HCT116 (cell line): ENCODE measurements at regions of chr5 and their contacts with region 1.

Region 1: GRCh38 chr5:50286902-50287301 is 154.2 kb downstream of the EMB start:
- DNase-seq: no peak
- ATAC-seq: no peak
- H3K4me3 ChIP-seq: no peak overlapping the region
- H3K27ac ChIP-seq: no peak overlapping the region
- H3K4me1 ChIP-seq: no peaks in the 10 kb centered on the region
- H3K27me3 ChIP-seq: no peaks in the 10 kb centered on the region; the same call in 1 of the 2 replicates
- CTCF ChIP-seq: no peak
- POLR2A ChIP-seq: no peak
- RAD21 ChIP-seq: no peak

Region 2: GRCh38 chr5:50343715-50344114 is 56.8 kb after region 1 on chr5:
- CTCF ChIA-PET with region 1: no interaction called
- POLR2A ChIA-PET with region 1: no interaction called
- RAD21 ChIA-PET with region 1: no interaction called
- intact Hi-C with region 1: loop called (anchors 10 kb)
- DNase-seq: no peak
- ATAC-seq: no peak
- H3K4me3 ChIP-seq: no peak overlapping the region
- H3K27ac ChIP-seq: no peak overlapping the region
- H3K4me1 ChIP-seq: no peaks in the 10 kb centered on the region
- H3K27me3 ChIP-seq: no peaks in the 10 kb centered on the region
- CTCF ChIP-seq: no peak
- POLR2A ChIP-seq: no peak
- RAD21 ChIP-seq: no peak

Region 3: GRCh38 chr5:51131266-51131665 is 844.4 kb after region 1 on chr5:
- CTCF ChIA-PET with region 1: no interaction called
- POLR2A ChIA-PET with region 1: no interaction called
- RAD21 ChIA-PET with region 1: no interaction called
- intact Hi-C with region 1: no loop called
- DNase-seq: no peak
- ATAC-seq: no peak
- H3K4me3 ChIP-seq: no peak overlapping the region
- H3K27ac ChIP-seq: no peak overlapping the region
- H3K4me1 ChIP-seq: no peaks in the 10 kb centered on the region
- H3K27me3 ChIP-seq: no peaks in the 10 kb centered on the region
- CTCF ChIP-seq: no peak
- POLR2A ChIP-seq: no peak
- RAD21 ChIP-seq: no peak